Heart left ventricle (tissue), 16 donors: ENCODE measurements at regions of chr16 and their contacts with region 1.

Region 1: DNA sequence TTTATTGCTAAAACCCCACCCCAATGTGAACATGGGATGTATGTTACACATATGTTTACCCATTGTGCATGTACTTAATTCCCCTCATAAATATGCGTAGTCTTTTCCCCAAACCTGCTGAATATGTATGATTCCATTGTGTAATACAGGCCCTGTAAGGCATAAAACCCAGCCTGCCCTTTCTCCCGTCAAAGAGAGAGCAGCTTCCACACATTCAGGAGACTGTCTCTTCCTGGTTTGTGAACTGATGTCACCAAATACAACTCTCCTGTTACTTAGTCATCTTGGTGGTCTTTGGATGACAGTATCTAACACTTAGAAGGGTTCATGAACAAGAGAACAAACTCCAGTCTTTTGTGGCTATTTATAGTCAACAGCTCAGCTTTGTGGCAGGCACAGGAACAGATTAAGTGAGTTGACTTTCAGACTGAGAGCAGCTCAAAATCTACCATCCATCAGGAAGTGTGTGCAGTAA is 24.7 kb upstream of the TMC7 start:
- DNase-seq: no peak
- ATAC-seq: peak; percentile 62 to 82 (median 73)
- H3K4me3 ChIP-seq: no peak overlapping the region
- H3K27ac ChIP-seq: peak overlapping the region; percentile 31 to 86 (median 70)
- H3K4me1 ChIP-seq: peaks cover 0 to 19% (median 6%) of the 10 kb centered on the region in 12 donors
- H3K27me3 ChIP-seq: no peaks in the 10 kb centered on the region
- CTCF ChIP-seq: no peak
- POLR2A ChIP-seq: no peak

Region 2: DNA sequence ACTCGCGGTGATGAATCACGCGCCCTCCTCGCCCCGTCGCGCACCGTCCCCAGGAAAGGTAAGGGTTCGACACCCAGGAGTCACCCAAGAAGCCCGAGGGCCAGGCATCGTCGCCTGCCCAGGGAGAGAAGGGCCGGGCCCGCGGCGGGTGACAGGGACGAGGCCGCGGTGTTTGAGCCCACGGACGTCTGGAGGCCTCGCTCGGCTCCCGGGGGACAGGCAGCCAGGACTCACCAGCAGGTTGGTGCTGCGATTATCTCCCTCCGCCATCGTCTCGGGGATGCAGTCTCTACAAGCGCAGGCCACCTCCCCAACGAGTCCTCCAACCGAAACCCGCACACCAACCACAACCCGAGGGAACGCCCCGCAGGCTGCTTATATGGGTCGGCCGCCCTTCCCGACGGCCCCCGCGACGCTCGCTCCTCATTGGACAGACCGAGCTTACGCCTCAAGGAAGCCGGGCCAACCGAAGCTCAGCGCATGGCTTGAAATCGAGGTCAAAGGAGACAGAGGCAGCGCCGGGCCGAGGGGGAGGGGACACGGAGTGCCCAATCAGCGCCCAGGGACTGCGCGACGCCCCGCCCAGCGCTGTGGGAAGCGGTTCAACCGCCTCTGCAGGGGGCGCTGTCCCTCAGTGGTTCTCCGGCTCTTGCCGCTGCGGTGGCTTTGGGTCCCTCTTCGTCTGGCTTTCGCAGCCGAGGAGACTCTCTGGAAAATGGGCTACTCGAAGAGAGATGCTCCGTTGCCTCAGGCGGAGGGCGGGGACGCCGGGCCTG is 157.7 kb before region 1 on chr16 and contains the start of gene ARL6IP1:
- intact Hi-C with region 1: loop called in 3 of 10 experiments (anchors 10 kb)
- DNase-seq: peak; percentile 99 to 100 (median 99)
- ATAC-seq: peak; percentile 98 to 100 (median 99)
- H3K4me3 ChIP-seq: peak within 1 kb of the TSS; percentile 70 to 96 (median 86)
- H3K27ac ChIP-seq: peak within 1 kb of the TSS; percentile 12 to 94 (median 88)
- H3K4me1 ChIP-seq: peaks cover 3 to 74% (median 34%) of the 10 kb centered on the region in 12 donors
- H3K27me3 ChIP-seq: no peaks in the 10 kb centered on the region
- CTCF ChIP-seq: peak; percentile 88 to 99 (median 94)
- POLR2A ChIP-seq: peak; percentile 97 to 99
- total RNA-seq, gene ARL6IP1: 16.5 to 63.2 (median 22.9) TPM

Region 3: DNA sequence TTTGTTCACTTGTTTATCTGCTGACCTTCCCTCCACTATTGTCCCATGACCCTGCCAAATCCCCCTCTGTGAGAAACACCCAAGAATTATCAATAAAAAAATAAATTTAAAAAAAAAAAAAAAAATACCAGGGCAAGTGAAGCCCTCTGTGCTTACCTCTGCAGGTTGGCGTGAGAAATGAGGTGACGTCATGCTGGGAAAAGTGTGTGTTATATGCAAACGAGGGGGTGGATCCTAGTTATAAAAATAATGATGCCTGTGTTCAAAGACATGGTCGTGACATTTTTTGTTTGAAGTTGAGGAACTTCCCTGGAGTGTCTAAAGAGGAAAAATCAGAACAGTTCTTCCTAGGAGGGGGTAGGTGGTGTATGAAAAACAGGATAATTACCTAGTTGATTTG is 44.9 kb after region 1 on chr16:
- intact Hi-C with region 1: no loop called
- DNase-seq: no peak
- ATAC-seq: no peak
- H3K4me3 ChIP-seq: no peak overlapping the region
- H3K27ac ChIP-seq: no peak overlapping the region
- H3K4me1 ChIP-seq: peaks cover 0 to 15% (median 0%) of the 10 kb centered on the region in 12 donors
- H3K27me3 ChIP-seq: no peaks in the 10 kb centered on the region
- CTCF ChIP-seq: no peak
- POLR2A ChIP-seq: no peak

Region 4: DNA sequence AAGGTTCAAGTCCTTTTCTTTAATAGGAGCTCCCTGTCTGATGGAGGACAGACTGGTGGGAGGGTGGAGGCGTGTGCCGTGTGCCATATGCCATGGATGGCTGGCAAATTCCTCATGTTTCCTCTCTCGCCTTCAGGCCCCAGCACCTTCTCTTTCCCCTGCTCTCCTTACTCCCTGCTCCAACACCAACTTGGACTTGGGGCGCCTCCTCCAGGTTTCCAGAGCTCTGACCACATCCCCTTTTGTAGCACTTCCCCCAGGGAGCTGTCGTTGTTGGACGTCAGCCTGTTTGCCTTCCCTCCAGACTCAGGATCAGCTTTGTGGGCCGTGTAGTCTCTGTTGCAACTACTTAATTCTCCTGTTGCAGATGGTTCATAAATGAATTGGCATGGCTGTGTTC is 55.4 kb after region 1 on chr16:
- intact Hi-C with region 1: no loop called
- DNase-seq: peak in 2 of 5 donors; percentile 16 to 24
- ATAC-seq: no peak
- H3K4me3 ChIP-seq: no peak overlapping the region
- H3K27ac ChIP-seq: no peak overlapping the region
- H3K4me1 ChIP-seq: no peaks in the 10 kb centered on the region
- H3K27me3 ChIP-seq: no peaks in the 10 kb centered on the region
- CTCF ChIP-seq: peak in 2 of 12 donors; percentile 12 to 30
- POLR2A ChIP-seq: no peak